H1 (cell line): ENCODE measurements at regions of chr2 and their contacts with region 1.

Region 1: DNA sequence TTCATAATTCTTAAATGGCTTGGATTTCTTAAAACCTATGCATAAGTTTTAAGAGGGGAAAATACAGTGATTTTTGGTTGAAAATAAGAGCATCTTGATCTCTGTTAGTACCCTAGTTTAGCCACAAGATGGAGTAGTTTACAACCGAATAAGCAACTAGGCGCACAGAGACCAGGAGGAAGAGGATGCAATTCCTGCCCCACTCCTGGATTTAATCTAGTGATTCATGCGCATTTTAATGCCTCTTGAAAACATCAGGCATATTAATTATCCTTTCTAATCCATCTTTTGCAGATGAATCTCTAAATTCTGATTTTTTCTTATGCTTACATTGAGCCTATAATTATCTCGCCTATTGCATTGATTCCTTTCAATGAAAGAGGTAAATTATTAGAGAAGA is 76.7 kb downstream of the MRPS9 start:
- DNase-seq: no peak
- H3K4me3 ChIP-seq: no peak overlapping the region
- H3K27ac ChIP-seq: no peak overlapping the region
- H3K4me1 ChIP-seq: no peaks in the 10 kb centered on the region
- H3K27me3 ChIP-seq: no peaks in the 10 kb centered on the region
- CTCF ChIP-seq: peak in 2 of 3 experiments; percentile 64 to 75; a peak in 3 of 4 replicates
- EP300 ChIP-seq: no peak
- POLR2A ChIP-seq: no peak
- RAD21 ChIP-seq: peak; percentile 93

Region 2: DNA sequence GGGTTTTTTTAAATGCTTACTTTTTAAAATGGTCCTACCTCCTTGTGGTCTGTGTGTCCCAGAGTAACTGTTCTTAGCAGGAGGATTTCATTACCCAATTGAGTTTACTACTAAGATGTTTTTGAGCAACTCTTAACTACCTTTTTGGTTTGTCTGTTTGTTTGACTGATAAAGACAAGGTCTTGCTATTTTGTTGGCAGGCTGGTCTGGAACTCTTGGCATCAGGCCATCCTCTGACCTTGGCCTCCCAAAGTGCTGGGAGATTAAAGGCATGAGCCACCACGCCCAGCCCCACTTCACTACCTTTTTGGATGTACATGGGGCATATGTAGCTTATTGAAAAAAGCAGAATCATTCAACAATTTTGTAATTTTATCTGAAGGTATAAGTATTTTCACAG is 61.8 kb before region 1 on chr2:
- CTCF ChIA-PET with region 1: no interaction called
- POLR2A ChIA-PET with region 1: no interaction called
- DNase-seq: no peak
- H3K4me3 ChIP-seq: no peak overlapping the region
- H3K27ac ChIP-seq: no peak overlapping the region
- H3K4me1 ChIP-seq: no peaks in the 10 kb centered on the region
- H3K27me3 ChIP-seq: no peaks in the 10 kb centered on the region
- CTCF ChIP-seq: no peak
- EP300 ChIP-seq: no peak
- POLR2A ChIP-seq: no peak
- RAD21 ChIP-seq: no peak

Region 3: GRCh38 chr2:105102963-105103421 is 11.6 kb before region 1 on chr2:
- CTCF ChIA-PET with region 1: interaction called, 45 read pairs
- POLR2A ChIA-PET with region 1: interaction called, 4 read pairs
- DNase-seq: peak; percentile 80 to 81
- H3K4me3 ChIP-seq: peak overlapping the region in 1 of 4 experiments; percentile 47; a peak in 3 of 8 replicates
- H3K27ac ChIP-seq: peak overlapping the region; percentile 32; the same call in 1 of the 2 replicates
- H3K4me1 ChIP-seq: peaks cover 4 to 12% (median 5%) of the 10 kb centered on the region in 4 experiments; a peak in 6 of 7 replicates
- H3K27me3 ChIP-seq: no peaks in the 10 kb centered on the region; a peak in 1 of 7 replicates
- CTCF ChIP-seq: no peak
- EP300 ChIP-seq: no peak
- POLR2A ChIP-seq: no peak
- RAD21 ChIP-seq: no peak

Region 4: GRCh38 chr2:105134081-105134480 is 19.5 kb after region 1 on chr2:
- CTCF ChIA-PET with region 1: interaction called, 27 read pairs
- POLR2A ChIA-PET with region 1: no interaction called
- DNase-seq: peak in 1 of 2 experiments; percentile 36
- H3K4me3 ChIP-seq: no peak overlapping the region
- H3K27ac ChIP-seq: no peak overlapping the region
- H3K4me1 ChIP-seq: no peaks in the 10 kb centered on the region
- H3K27me3 ChIP-seq: no peaks in the 10 kb centered on the region
- CTCF ChIP-seq: no peak
- EP300 ChIP-seq: no peak
- POLR2A ChIP-seq: no peak
- RAD21 ChIP-seq: no peak

Region 5: GRCh38 chr2:105166688-105167087 is 52.1 kb after region 1 on chr2:
- CTCF ChIA-PET with region 1: interaction called, 32 read pairs
- POLR2A ChIA-PET with region 1: no interaction called
- DNase-seq: peak in 1 of 2 experiments; percentile 39
- H3K4me3 ChIP-seq: no peak overlapping the region
- H3K27ac ChIP-seq: no peak overlapping the region
- H3K4me1 ChIP-seq: peaks cover 0 to 8% (median 5%) of the 10 kb centered on the region in 4 experiments; a peak in 3 of 7 replicates
- H3K27me3 ChIP-seq: no peaks in the 10 kb centered on the region; a peak in 1 of 7 replicates
- CTCF ChIP-seq: no peak
- EP300 ChIP-seq: no peak
- POLR2A ChIP-seq: no peak
- RAD21 ChIP-seq: no peak

Region 6: DNA sequence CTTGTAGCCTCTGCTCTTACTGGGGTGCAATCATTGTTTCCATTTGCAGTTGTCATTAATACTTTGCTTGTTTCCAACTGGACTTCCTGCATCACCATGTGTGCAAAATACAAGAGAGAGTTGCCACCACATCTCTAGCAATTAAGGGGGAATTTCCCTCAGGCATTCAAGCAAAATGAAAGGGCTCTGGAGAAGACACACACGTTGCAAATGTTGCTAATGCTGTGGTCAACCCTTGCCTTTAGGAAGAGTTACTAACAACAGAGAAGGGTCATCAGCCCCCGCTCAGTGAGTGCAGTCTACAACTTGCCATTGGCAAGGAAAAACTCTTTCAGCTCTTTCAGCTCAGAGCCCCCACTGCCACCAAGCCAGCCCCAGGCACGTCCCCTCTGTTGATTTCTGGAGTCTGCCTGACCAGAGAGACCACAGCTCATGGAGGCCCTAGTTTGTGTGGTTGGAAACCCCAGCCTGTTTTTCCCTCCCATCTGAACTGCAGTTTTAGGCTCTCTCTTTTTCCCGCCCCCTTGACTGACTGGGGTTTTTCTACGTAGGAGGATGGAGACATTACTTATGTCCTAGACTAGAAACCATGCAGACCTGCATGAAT is 101.1 kb after region 1 on chr2:
- CTCF ChIA-PET with region 1: interaction called, 15 read pairs
- POLR2A ChIA-PET with region 1: no interaction called
- DNase-seq: no peak
- H3K4me3 ChIP-seq: no peak overlapping the region
- H3K27ac ChIP-seq: no peak overlapping the region
- H3K4me1 ChIP-seq: no peaks in the 10 kb centered on the region
- H3K27me3 ChIP-seq: no peaks in the 10 kb centered on the region
- CTCF ChIP-seq: no peak
- EP300 ChIP-seq: no peak
- POLR2A ChIP-seq: no peak
- RAD21 ChIP-seq: no peak

Region 7: GRCh38 chr2:105235388-105236054 is 121.0 kb after region 1 on chr2:
- CTCF ChIA-PET with region 1: interaction called, 541 read pairs
- POLR2A ChIA-PET with region 1: interaction called, 9 read pairs
- DNase-seq: peak; percentile 82 to 88
- H3K4me3 ChIP-seq: no peak overlapping the region
- H3K27ac ChIP-seq: no peak overlapping the region
- H3K4me1 ChIP-seq: peaks cover 0 to 4% (median 0%) of the 10 kb centered on the region in 4 experiments; a peak in 2 of 7 replicates
- H3K27me3 ChIP-seq: no peaks in the 10 kb centered on the region; a peak in 1 of 7 replicates
- CTCF ChIP-seq: peak; percentile 57 to 84 (median 79)
- EP300 ChIP-seq: no peak
- POLR2A ChIP-seq: no peak
- RAD21 ChIP-seq: peak; percentile 79 to 86